Activated CD4-positive, alpha-beta T cell treated with anti-CD3 and anti-CD28 coated beads for 36 hours (primary cell): ENCODE measurements at regions of chr1 and their contacts with region 1.

Region 1: GRCh38 chr1:5977494-5978444 is 14.5 kb downstream of the NPHP4 start:
- DNase-seq: no peak
- ATAC-seq: no peak
- H3K4me3 Mint-ChIP-seq: no peak overlapping the region
- H3K27ac Mint-ChIP-seq: no peak overlapping the region
- H3K4me1 Mint-ChIP-seq: no peaks in the 10 kb centered on the region
- H3K27me3 Mint-ChIP-seq: no peaks in the 10 kb centered on the region

Region 2: GRCh38 chr1:5509664-5510452 is 467.9 kb before region 1 on chr1:
- CTCF ChIA-PET with region 1: no interaction called
- POLR2A ChIA-PET with region 1: no interaction called
- intact Hi-C with region 1: loop called in 1 of 2 experiments (anchors 2 kb)
- DNase-seq: peak; percentile 82
- ATAC-seq: peak; percentile 60
- H3K4me3 Mint-ChIP-seq: no peak overlapping the region
- H3K27ac Mint-ChIP-seq: no peak overlapping the region
- H3K4me1 Mint-ChIP-seq: peaks cover 2% of the 10 kb centered on the region
- H3K27me3 Mint-ChIP-seq: peaks cover 6% of the 10 kb centered on the region